CD8-positive, alpha-beta T cell (primary cell): ENCODE measurements at regions of chr6 and their contacts with region 1.

Region 1: DNA sequence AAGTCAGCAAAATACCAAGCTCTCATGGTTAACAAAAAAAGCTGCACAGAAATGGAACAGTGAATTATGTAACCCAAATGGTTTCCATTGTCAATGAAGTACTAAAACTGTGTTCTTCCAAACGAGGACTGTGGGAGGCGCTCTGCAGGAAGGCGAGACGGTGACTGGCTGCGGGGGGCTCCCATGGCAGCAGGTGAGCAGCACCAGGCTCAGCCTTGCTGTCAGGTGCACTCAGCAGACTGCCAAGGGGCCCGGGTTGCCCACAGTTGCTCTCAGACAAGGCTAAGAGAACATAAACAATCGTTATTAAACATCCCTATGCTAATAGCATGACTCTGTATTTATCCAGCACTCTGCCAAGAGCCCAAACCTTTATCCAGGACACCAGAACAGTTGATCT is 630.3 kb upstream of the ARID1B start:
- DNase-seq: no peak
- ATAC-seq: no peak
- H3K4me3 ChIP-seq: no peak overlapping the region
- H3K4me3 Mint-ChIP-seq: no peak overlapping the region
- H3K27ac ChIP-seq: no peak overlapping the region
- H3K27ac Mint-ChIP-seq: no peak overlapping the region
- H3K4me1 ChIP-seq: no peaks in the 10 kb centered on the region
- H3K4me1 Mint-ChIP-seq: no peaks in the 10 kb centered on the region
- H3K27me3 ChIP-seq: no peaks in the 10 kb centered on the region
- H3K27me3 Mint-ChIP-seq: peaks cover 2% of the 10 kb centered on the region
- CTCF ChIP-seq: no peak

Region 2: GRCh38 chr6:156102129-156102528 is 44.8 kb before region 1 on chr6:
- CTCF ChIA-PET with region 1: no interaction called
- POLR2A ChIA-PET with region 1: no interaction called
- intact Hi-C with region 1: loop called in 1 of 2 experiments (anchors 1 kb)
- DNase-seq: no peak
- ATAC-seq: no peak
- H3K4me3 ChIP-seq: no peak overlapping the region
- H3K4me3 Mint-ChIP-seq: no peak overlapping the region
- H3K27ac ChIP-seq: no peak overlapping the region
- H3K27ac Mint-ChIP-seq: no peak overlapping the region
- H3K4me1 ChIP-seq: no peaks in the 10 kb centered on the region
- H3K4me1 Mint-ChIP-seq: no peaks in the 10 kb centered on the region
- H3K27me3 ChIP-seq: no peaks in the 10 kb centered on the region
- H3K27me3 Mint-ChIP-seq: no peaks in the 10 kb centered on the region
- CTCF ChIP-seq: no peak